ENCODE measurements at regions of chr10 and their contacts with region 1.

Region 1: GRCh38 chr10:91797874-91798648 is at the start of gene TNKS2:
- DNase-seq: peak; percentile 95
- H3K4me3 Mint-ChIP-seq: peak within 1 kb of the TSS; percentile 86
- H3K27ac Mint-ChIP-seq: peak within 1 kb of the TSS; percentile 91
- H3K4me1 Mint-ChIP-seq: peaks cover 53% of the 10 kb centered on the region
- H3K27me3 Mint-ChIP-seq: peaks cover 1% of the 10 kb centered on the region
- total RNA-seq, gene TNKS2: 34.5 to 35.7 TPM

Region 2: GRCh38 chr10:90871766-90872647 is 926.1 kb before region 1 on chr10 and contains the start of gene RPP30:
- CTCF ChIA-PET with region 1: no interaction called
- POLR2A ChIA-PET with region 1: no interaction called
- intact Hi-C with region 1: loop called (anchors 2 kb)
- DNase-seq: peak; percentile 91
- H3K4me3 Mint-ChIP-seq: peak within 1 kb of the TSS; percentile 93
- H3K27ac Mint-ChIP-seq: peak within 1 kb of the TSS; percentile 98
- H3K4me1 Mint-ChIP-seq: peaks cover 31% of the 10 kb centered on the region
- H3K27me3 Mint-ChIP-seq: peaks cover 24% of the 10 kb centered on the region
- total RNA-seq, gene RPP30: 103 to 108 TPM

Region 3: DNA sequence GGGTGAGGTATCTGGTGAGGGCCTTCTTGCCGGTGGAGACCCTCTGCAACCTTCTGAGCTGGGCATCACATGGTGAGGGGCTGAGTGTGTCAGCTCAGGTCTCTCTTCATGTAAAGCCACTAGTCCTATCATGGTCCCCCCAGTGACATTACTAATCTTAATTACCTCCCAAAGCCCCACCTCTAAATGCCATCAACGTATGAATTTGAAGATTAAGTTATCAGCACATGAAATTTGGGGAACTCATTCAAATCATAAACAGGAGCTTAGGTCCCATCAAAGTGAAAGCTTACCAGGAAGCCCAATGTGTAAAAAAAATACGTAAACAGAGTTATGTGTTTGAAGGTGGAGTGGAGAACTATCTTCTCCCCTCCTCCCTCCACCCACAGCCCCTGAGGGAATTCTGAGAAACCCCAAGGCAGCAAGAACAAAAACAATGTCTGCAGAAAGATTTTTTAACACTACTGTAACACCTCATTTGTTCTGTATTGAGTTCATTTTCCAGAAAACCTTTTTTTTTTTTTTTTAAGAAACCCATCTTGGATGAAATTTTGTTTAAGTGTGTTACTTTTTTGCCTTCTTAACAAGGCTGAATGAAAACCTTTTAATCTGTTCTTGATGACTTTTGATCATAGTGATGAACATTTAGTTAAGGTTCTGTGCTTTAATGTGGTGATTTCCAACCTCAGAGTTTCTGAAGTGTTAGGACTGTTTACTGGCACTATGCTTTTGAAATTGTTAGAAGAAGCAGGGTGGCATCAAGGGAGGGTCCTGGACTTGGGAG is 596.7 kb before region 1 on chr10:
- CTCF ChIA-PET with region 1: no interaction called
- POLR2A ChIA-PET with region 1: no interaction called
- intact Hi-C with region 1: loop called (anchors 5 kb)
- DNase-seq: peak; percentile 80
- H3K4me3 Mint-ChIP-seq: peak overlapping the region; percentile 49
- H3K27ac Mint-ChIP-seq: peak overlapping the region; percentile 86
- H3K4me1 Mint-ChIP-seq: peaks cover 87% of the 10 kb centered on the region
- H3K27me3 Mint-ChIP-seq: no peaks in the 10 kb centered on the region

Region 4: GRCh38 chr10:91864099-91864498 is 66.0 kb after region 1 on chr10:
- CTCF ChIA-PET with region 1: no interaction called
- POLR2A ChIA-PET with region 1: no interaction called
- intact Hi-C with region 1: no loop called
- DNase-seq: no peak
- H3K4me3 Mint-ChIP-seq: no peak overlapping the region
- H3K27ac Mint-ChIP-seq: no peak overlapping the region
- H3K4me1 Mint-ChIP-seq: peaks cover 6% of the 10 kb centered on the region
- H3K27me3 Mint-ChIP-seq: no peaks in the 10 kb centered on the region

Region 5: DNA sequence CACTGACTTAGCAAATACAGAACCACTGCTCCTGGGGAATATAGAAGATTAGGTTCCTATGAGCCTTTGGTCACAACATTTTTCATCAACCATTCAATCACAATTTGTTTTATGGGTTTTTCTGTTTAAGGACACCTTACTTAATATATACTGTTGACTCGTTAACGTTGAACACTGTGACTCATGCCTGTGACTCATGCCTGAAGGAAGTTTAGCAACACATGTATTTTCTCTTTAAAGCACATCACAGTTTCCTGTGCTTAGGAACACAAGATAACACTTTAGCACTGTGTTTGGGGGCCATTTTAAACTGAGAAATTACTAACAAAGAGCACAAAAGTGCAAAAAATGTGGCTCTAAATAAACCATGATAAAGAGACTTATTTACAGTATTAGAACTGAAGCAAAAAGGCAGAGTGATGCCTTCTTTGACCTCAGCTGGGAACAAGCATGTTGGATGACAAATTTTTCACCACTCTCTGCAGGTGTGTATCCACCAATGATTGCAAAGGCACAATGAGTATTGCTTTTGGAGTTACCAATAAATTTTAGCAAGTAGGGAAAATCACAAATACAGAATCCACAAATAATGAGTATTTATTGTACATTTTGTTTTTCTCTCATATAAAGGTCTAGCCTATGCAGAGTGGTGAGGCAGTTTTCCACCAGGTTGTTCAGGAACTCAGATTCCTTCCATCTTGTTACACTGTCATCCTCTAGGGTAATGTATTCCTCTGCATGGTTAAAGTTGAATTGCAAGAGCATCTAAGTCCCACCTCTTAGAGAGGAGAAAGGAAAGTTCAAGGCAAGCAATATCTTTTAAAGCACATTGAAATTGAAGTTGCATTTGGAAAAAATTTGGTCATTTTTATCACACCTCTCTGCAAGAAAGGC is 104.0 kb after region 1 on chr10:
- CTCF ChIA-PET with region 1: interaction called, 9 read pairs
- POLR2A ChIA-PET with region 1: no interaction called
- intact Hi-C with region 1: loop called (anchors 1 kb)
- DNase-seq: peak; percentile 69
- H3K4me3 Mint-ChIP-seq: no peak overlapping the region
- H3K27ac Mint-ChIP-seq: peak overlapping the region; percentile 72
- H3K4me1 Mint-ChIP-seq: peaks cover 23% of the 10 kb centered on the region
- H3K27me3 Mint-ChIP-seq: peaks cover 2% of the 10 kb centered on the region

Region 6: DNA sequence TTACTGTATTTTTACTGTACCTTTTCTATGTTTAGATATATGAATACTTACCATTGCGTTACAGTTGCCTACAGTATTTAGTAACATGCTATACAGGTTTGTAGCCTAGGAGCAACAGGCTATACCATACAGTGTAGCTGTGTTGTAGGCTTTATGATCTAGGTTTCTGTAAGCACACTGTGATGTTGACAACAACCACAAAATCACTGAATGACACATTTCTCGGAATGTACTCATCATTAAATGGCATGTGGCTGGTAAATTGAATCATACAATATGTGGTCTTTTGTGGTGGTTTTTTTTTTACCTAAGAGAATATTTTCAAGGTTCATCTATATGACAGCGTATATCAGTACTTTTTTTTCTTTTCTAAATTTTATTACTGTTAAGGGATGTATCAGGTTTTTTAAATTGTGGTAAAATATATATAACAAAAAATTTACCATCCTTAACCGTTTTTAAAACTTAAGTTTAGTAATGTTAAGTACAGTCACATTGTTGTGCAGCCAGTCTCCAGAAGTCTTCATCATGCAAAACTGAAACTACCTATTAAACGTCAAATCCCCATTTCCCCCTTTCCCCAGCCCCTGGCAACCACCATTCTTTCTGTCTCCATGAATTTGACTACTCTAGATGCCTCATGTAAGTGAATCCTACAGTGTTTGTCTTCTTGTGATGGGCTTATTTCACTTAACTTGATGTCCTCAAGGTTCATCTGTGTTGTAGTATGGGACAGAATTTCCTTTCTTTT is 147.0 kb after region 1 on chr10:
- CTCF ChIA-PET with region 1: no interaction called
- POLR2A ChIA-PET with region 1: interaction called, 4 read pairs
- intact Hi-C with region 1: loop called (anchors 1 kb)
- DNase-seq: peak; percentile 48
- H3K4me3 Mint-ChIP-seq: no peak overlapping the region
- H3K27ac Mint-ChIP-seq: peak overlapping the region; percentile 61
- H3K4me1 Mint-ChIP-seq: peaks cover 21% of the 10 kb centered on the region
- H3K27me3 Mint-ChIP-seq: no peaks in the 10 kb centered on the region

Region 7: DNA sequence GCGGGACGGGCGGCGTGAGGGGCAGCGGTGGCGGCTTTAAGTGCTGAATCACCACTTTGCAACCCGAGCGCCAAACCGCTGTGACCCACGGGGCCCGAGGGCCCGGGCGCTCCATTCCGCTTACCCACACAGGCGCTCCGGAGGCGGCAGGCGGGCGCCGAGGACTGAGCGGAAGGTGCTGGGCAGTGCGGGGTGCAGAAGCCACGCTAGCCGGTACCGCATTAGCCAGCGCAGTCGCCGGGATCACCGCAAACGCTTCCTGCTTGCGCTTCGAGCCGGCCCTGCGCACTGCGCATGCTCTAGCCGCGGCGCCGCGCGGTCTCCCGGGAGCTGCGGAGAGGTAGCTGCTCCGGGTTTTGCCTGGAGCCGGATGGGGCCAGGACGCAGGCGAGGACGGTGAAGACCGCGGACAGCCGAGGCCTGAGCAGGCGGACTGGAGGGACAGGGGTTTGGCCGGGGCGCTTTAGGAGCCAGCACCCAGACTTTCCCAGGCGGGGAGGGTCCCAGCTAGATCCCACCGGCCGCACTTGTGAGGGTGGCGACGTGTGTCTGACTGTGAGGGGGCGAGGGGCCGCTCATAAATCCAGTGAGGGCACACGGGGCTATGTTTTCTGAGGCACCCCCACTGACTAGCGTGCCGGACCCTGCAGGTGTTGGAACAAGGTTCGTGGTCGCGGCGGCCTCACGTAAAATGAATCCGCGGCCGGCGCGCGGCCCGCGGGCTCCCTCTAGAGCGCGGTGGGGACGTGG is 775.9 kb after region 1 on chr10 and contains the start of gene IDE:
- CTCF ChIA-PET with region 1: no interaction called
- POLR2A ChIA-PET with region 1: no interaction called
- intact Hi-C with region 1: loop called (anchors 5 kb)
- DNase-seq: peak; percentile 90
- H3K4me3 Mint-ChIP-seq: peak within 1 kb of the TSS; percentile 56
- H3K27ac Mint-ChIP-seq: peak within 1 kb of the TSS; percentile 85
- H3K4me1 Mint-ChIP-seq: peaks cover 34% of the 10 kb centered on the region
- H3K27me3 Mint-ChIP-seq: no peaks in the 10 kb centered on the region
- total RNA-seq, gene IDE: 32.3 to 40.1 TPM